Breast epithelium (tissue), 4 donors: ENCODE measurements at regions of chr7 and their contacts with region 1.

Region 1: DNA sequence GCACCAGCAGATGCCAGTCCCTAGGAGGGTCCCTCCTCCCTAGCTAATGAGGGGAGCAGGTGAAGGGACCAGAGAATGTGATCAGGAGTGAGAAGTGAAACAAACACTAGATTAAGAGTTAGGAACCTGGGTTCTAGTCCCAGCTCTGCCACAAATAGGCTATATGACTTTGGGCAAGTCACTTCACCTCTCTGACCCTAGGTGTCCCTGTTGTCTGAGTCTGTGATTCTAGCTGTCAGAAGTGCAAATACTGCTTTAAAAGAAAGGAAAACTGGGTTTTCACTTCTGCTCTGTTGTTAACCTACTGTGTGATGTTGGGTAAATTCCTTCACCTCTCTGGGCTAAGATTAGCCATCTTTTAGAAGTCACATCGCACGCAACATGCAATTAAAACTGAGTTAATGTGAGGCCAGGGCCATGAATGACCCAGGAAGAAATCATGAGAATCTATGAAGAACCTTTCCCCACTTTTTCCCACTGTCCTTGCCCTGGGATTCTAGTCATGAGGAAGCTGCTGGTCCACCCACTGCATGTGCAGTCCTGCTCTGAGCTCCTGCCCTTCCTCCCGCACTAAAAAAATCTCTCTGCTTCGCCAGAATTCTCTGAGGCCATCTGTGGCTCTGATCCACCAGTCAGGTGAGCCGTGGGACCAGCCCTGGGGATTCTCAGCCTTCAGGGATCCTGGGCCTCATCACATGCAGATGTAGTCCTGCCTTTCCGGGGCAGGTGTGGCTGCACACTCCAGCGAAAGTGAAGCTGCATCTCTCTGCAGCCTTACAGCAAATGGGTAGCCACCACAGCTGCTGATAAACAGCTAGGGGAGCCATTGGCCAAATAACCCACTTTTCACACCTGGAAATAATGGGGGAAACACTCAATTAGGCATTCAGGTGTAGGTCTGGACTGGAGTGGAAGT is 181.7 kb downstream of the PLXNA4 start:
- DNase-seq: no peak
- H3K4me3 ChIP-seq: no peak overlapping the region
- H3K27ac ChIP-seq: peak overlapping the region in 1 of 2 donors; percentile 25
- H3K4me1 ChIP-seq: no peaks in the 10 kb centered on the region
- H3K27me3 ChIP-seq: peaks cover 0 to 3% of the 10 kb centered on the region in 2 donors
- CTCF ChIP-seq: no peak
- POLR2A ChIP-seq: no peak

Region 2: GRCh38 chr7:132364226-132364625 is 30.3 kb before region 1 on chr7:
- intact Hi-C with region 1: loop called (anchors 1 kb)
- DNase-seq: no peak
- H3K4me3 ChIP-seq: no peak overlapping the region
- H3K27ac ChIP-seq: no peak overlapping the region
- H3K4me1 ChIP-seq: no peaks in the 10 kb centered on the region
- H3K27me3 ChIP-seq: no peaks in the 10 kb centered on the region
- CTCF ChIP-seq: no peak
- POLR2A ChIP-seq: no peak

Region 3: GRCh38 chr7:133331861-133332260 is 937.3 kb after region 1 on chr7:
- intact Hi-C with region 1: loop called (anchors 5 kb)
- DNase-seq: no peak
- H3K4me3 ChIP-seq: no peak overlapping the region
- H3K27ac ChIP-seq: no peak overlapping the region
- H3K4me1 ChIP-seq: no peaks in the 10 kb centered on the region
- H3K27me3 ChIP-seq: no peaks in the 10 kb centered on the region
- CTCF ChIP-seq: no peak
- POLR2A ChIP-seq: no peak